ENCODE measurements at regions of chr4 and their contacts with region 1.

Region 1: GRCh38 chr4:139099366-139099982 is 77.5 kb downstream of the ELF2 start:
- DNase-seq: peak; percentile 37 to 89 (median 75)
- ATAC-seq: peak; percentile 80
- H3K4me3 ChIP-seq: no peak overlapping the region
- H3K4me3 Mint-ChIP-seq: no peak overlapping the region
- H3K27ac ChIP-seq: no peak overlapping the region
- H3K27ac Mint-ChIP-seq: no peak overlapping the region
- H3K4me1 ChIP-seq: no peaks in the 10 kb centered on the region
- H3K4me1 Mint-ChIP-seq: peaks cover 2% of the 10 kb centered on the region
- H3K27me3 ChIP-seq: no peaks in the 10 kb centered on the region
- H3K27me3 Mint-ChIP-seq: no peaks in the 10 kb centered on the region
- CTCF ChIP-seq: peak; percentile 76

Region 2: GRCh38 chr4:139229534-139230039 is 130.1 kb after region 1 on chr4:
- CTCF ChIA-PET with region 1: interaction called, 3 read pairs
- POLR2A ChIA-PET with region 1: no interaction called
- intact Hi-C with region 1: loop called (anchors 1 to 5 kb)
- DNase-seq: peak in 3 of 9 experiments; percentile 7 to 74 (median 64)
- ATAC-seq: peak; percentile 70
- H3K4me3 ChIP-seq: no peak overlapping the region
- H3K4me3 Mint-ChIP-seq: no peak overlapping the region
- H3K27ac ChIP-seq: no peak overlapping the region
- H3K27ac Mint-ChIP-seq: no peak overlapping the region
- H3K4me1 ChIP-seq: no peaks in the 10 kb centered on the region
- H3K4me1 Mint-ChIP-seq: no peaks in the 10 kb centered on the region
- H3K27me3 ChIP-seq: no peaks in the 10 kb centered on the region
- H3K27me3 Mint-ChIP-seq: no peaks in the 10 kb centered on the region
- CTCF ChIP-seq: peak; percentile 72

Region 3: DNA sequence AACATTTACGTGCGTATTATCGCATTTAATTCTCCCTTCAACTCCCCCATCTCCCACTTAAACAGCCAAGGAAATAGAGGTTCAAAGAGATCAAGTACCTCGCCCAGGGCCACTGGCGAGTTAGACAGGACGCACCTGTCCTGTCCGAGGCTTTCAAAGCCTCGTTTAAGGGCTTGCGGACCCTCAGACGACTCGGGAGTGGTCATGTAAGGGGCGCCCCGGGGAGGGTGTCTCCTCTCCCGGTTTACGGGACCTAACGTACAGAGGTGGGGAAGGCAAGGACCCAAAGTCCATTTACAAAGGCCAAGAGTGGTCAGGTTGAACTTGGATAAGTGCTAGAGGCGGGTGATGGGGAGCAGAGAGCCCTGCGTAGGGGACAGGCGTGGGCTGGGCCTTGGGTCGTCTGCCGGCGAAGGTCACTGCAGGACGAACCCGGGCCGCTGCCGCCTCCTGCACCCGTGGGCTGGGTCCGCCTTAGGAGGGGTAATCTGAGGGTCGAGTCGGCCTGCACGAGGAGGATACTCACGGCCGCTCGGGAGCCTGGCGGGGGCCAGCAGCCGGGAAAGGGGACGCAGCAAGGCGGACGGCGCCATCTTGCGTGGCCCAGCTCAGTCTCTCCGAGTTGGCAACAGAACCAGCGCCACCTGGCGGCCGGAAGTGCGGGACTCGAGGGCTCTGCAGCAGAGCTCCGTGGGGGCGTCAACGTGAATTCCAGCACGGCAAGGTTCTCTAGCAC is 195.9 kb after region 1 on chr4:
- CTCF ChIA-PET with region 1: interaction called, 31 read pairs
- POLR2A ChIA-PET with region 1: no interaction called
- intact Hi-C with region 1: loop called (anchors 1 kb)
- DNase-seq: peak; percentile 94 to 100 (median 99)
- ATAC-seq: peak; percentile 91
- H3K4me3 ChIP-seq: peak overlapping the region; percentile 65 to 91
- H3K4me3 Mint-ChIP-seq: peak overlapping the region; percentile 91
- H3K27ac ChIP-seq: peak overlapping the region; percentile 74 to 87
- H3K27ac Mint-ChIP-seq: peak overlapping the region; percentile 95
- H3K4me1 ChIP-seq: peaks cover 31% of the 10 kb centered on the region
- H3K4me1 Mint-ChIP-seq: peaks cover 37% of the 10 kb centered on the region
- H3K27me3 ChIP-seq: no peaks in the 10 kb centered on the region
- H3K27me3 Mint-ChIP-seq: no peaks in the 10 kb centered on the region
- CTCF ChIP-seq: peak; percentile 77

Region 4: DNA sequence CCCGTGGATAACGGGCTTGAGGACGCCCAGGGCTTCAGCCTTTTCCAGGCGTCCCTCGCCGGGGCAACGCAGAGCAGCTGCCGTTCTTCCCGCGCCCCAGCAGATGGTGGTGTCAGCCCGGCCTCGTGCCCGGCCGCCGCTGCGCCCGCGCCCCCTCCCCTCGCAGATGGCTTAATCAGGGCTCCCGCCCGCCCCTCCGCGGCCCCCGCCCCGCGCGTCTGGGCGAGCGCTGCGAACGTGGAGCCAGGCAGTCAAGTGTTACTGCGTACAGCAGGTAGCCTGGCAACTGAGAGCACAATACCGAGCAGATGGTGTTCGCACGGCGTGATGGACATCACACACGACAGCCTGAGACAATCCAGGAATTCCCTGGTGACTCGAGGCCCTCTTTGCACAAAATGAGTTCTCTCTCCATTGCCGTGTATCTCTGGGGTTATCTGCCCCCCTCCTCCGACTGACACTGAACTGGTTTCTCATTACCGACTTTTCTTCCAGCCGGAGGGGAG is 635.5 kb after region 1 on chr4:
- CTCF ChIA-PET with region 1: no interaction called
- POLR2A ChIA-PET with region 1: no interaction called
- intact Hi-C with region 1: loop called in 1 of 2 experiments (anchors 5 kb)
- DNase-seq: peak; percentile 8 to 68 (median 50)
- ATAC-seq: peak; percentile 77
- H3K4me3 ChIP-seq: peak overlapping the region; percentile 28 to 58
- H3K4me3 Mint-ChIP-seq: peak overlapping the region; percentile 76
- H3K27ac ChIP-seq: no peak overlapping the region
- H3K27ac Mint-ChIP-seq: no peak overlapping the region
- H3K4me1 ChIP-seq: peaks cover 7% of the 10 kb centered on the region
- H3K4me1 Mint-ChIP-seq: peaks cover 15% of the 10 kb centered on the region
- H3K27me3 ChIP-seq: peaks cover 8 to 9% of the 10 kb centered on the region in 2 experiments
- H3K27me3 Mint-ChIP-seq: peaks cover 23% of the 10 kb centered on the region
- CTCF ChIP-seq: peak; percentile 22

Measured in CD8-positive, alpha-beta T cell (primary cell).